ENCODE measurements at regions of chr3 and their contacts with region 1.

Region 1: GRCh38 chr3:136196401-136197158 is 445 bp upstream of the MSL2 start:
- DNase-seq: peak; percentile 99
- ATAC-seq: peak; percentile 89
- H3K4me3 ChIP-seq: peak overlapping the region; percentile 97
- H3K27ac ChIP-seq: peak overlapping the region; percentile 100
- H3K4me1 ChIP-seq: peaks cover 9% of the 10 kb centered on the region
- H3K27me3 ChIP-seq: no peaks in the 10 kb centered on the region
- CTCF ChIP-seq: no peak

Region 2: GRCh38 chr3:135992072-135992471 is 204.5 kb before region 1 on chr3:
- CTCF ChIA-PET with region 1: no interaction called
- POLR2A ChIA-PET with region 1: no interaction called
- in situ Hi-C with region 1: no loop called
- intact Hi-C with region 1: no loop called
- DNase-seq: peak; percentile 50
- ATAC-seq: peak; percentile 76
- H3K4me3 ChIP-seq: no peak overlapping the region
- H3K27ac ChIP-seq: no peak overlapping the region
- H3K4me1 ChIP-seq: peaks cover 13% of the 10 kb centered on the region; the same call in 1 of the 2 replicates
- H3K27me3 ChIP-seq: no peaks in the 10 kb centered on the region
- CTCF ChIP-seq: no peak

Region 3: GRCh38 chr3:136055491-136055890 is 141.1 kb before region 1 on chr3:
- CTCF ChIA-PET with region 1: no interaction called
- POLR2A ChIA-PET with region 1: no interaction called
- in situ Hi-C with region 1: no loop called
- intact Hi-C with region 1: no loop called
- DNase-seq: no peak
- ATAC-seq: no peak
- H3K4me3 ChIP-seq: no peak overlapping the region
- H3K27ac ChIP-seq: no peak overlapping the region
- H3K4me1 ChIP-seq: no peaks in the 10 kb centered on the region
- H3K27me3 ChIP-seq: no peaks in the 10 kb centered on the region
- CTCF ChIP-seq: no peak

Region 4: GRCh38 chr3:136075218-136075808 is 121.3 kb before region 1 on chr3:
- CTCF ChIA-PET with region 1: interaction called, 8 read pairs
- POLR2A ChIA-PET with region 1: no interaction called
- in situ Hi-C with region 1: no loop called
- intact Hi-C with region 1: loop called (anchors 5 kb)
- DNase-seq: peak; percentile 69
- ATAC-seq: peak; percentile 79
- H3K4me3 ChIP-seq: no peak overlapping the region
- H3K27ac ChIP-seq: no peak overlapping the region
- H3K4me1 ChIP-seq: peaks cover 15% of the 10 kb centered on the region
- H3K27me3 ChIP-seq: no peaks in the 10 kb centered on the region
- CTCF ChIP-seq: peak; percentile 90; the same call in 1 of the 2 replicates

Region 5: GRCh38 chr3:136142592-136142991 is 54.0 kb before region 1 on chr3:
- CTCF ChIA-PET with region 1: no interaction called
- POLR2A ChIA-PET with region 1: interaction called, 15 read pairs
- in situ Hi-C with region 1: no loop called
- intact Hi-C with region 1: no loop called
- DNase-seq: peak; percentile 90
- ATAC-seq: peak; percentile 89
- H3K4me3 ChIP-seq: no peak overlapping the region
- H3K27ac ChIP-seq: peak overlapping the region; percentile 68
- H3K4me1 ChIP-seq: peaks cover 22% of the 10 kb centered on the region
- H3K27me3 ChIP-seq: no peaks in the 10 kb centered on the region
- CTCF ChIP-seq: no peak

Region 6: DNA sequence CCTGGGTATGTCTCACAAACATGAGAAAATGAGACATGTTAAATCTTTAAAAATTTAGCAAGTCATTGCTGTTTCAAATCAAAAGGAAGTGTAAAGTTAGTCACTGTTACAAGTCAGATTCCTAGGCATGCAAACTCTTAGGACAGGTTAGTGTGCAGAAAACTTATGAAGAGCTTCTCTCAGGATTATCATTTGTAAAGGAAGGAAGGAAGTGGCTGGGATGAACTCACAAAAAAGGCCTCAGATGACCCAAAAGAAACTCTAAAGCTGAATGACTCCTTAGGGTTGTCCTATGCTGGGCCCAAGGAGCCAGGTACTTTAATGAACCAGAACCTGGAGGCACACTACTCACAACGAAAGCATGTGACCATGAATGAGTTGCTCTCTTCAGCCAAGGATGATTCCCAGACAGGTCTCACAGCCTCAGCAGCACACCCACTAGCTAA is 25.5 kb before region 1 on chr3:
- CTCF ChIA-PET with region 1: interaction called, 10 read pairs
- POLR2A ChIA-PET with region 1: no interaction called
- in situ Hi-C with region 1: no loop called
- intact Hi-C with region 1: no loop called
- DNase-seq: no peak
- ATAC-seq: peak; percentile 72
- H3K4me3 ChIP-seq: no peak overlapping the region
- H3K27ac ChIP-seq: no peak overlapping the region
- H3K4me1 ChIP-seq: peaks cover 15% of the 10 kb centered on the region; the same call in 1 of the 2 replicates
- H3K27me3 ChIP-seq: no peaks in the 10 kb centered on the region
- CTCF ChIP-seq: no peak

Region 7: DNA sequence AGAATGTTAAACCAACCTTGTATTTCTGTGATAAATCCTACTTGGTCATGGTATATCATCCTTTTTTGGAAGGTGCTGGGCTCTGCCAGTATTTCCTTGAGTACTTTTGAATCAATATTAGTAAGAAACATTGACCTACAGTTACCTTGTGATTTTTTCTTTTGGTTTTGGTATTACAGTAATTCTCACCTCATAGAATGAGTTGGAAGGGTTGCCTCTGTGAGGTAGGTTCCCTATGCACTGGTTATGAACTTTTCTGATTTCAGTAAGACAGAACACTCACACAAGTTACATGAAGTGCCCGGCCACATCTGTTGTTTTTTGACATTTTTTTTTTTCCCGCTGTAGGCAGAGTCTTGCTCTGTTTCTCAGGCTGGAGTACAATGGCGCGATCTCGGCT is 73.6 kb after region 1 on chr3:
- CTCF ChIA-PET with region 1: no interaction called
- POLR2A ChIA-PET with region 1: interaction called, 15 read pairs
- in situ Hi-C with region 1: no loop called
- intact Hi-C with region 1: no loop called
- DNase-seq: no peak
- ATAC-seq: no peak
- H3K4me3 ChIP-seq: no peak overlapping the region
- H3K27ac ChIP-seq: no peak overlapping the region
- H3K4me1 ChIP-seq: no peaks in the 10 kb centered on the region
- H3K27me3 ChIP-seq: no peaks in the 10 kb centered on the region
- CTCF ChIP-seq: no peak

Region 8: GRCh38 chr3:136396916-136397315 is 200.3 kb after region 1 on chr3:
- CTCF ChIA-PET with region 1: no interaction called
- POLR2A ChIA-PET with region 1: interaction called, 11 read pairs
- in situ Hi-C with region 1: no loop called
- intact Hi-C with region 1: no loop called
- DNase-seq: no peak
- ATAC-seq: peak; percentile 71
- H3K4me3 ChIP-seq: no peak overlapping the region
- H3K27ac ChIP-seq: no peak overlapping the region
- H3K4me1 ChIP-seq: peaks cover 5% of the 10 kb centered on the region; the same call in 1 of the 2 replicates
- H3K27me3 ChIP-seq: no peaks in the 10 kb centered on the region
- CTCF ChIP-seq: no peak

Region 9: DNA sequence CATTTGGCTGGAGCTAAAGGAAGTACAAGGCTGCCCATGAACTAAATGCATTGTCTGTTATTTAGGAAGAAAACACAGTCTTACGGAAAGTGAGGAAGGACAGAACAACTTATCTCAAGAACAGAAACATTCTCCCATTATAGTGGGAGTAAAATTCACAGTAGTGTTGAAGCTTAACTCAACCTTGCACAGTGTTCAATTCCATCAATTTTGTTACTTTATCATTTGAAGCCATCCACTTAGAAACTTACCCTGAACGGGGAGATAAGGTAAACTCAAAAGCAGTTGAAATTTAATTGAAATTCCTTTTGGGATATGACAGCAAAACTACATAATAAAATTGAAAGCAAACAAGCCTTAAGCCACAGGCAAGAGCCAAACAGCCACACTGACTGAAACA is 240.5 kb after region 1 on chr3:
- CTCF ChIA-PET with region 1: interaction called, 4 read pairs
- POLR2A ChIA-PET with region 1: interaction called, 11 read pairs
- in situ Hi-C with region 1: no loop called
- intact Hi-C with region 1: no loop called
- DNase-seq: no peak
- ATAC-seq: no peak
- H3K4me3 ChIP-seq: no peak overlapping the region
- H3K27ac ChIP-seq: no peak overlapping the region
- H3K4me1 ChIP-seq: 0 out of 2 replicates have a peak, but pooled peaks cover 2% of the 10 kb centered on the region
- H3K27me3 ChIP-seq: no peaks in the 10 kb centered on the region
- CTCF ChIP-seq: no peak

Measured in Panc1 (cell line).